Activated B cell treated with CpG ODN at 0.5 μM for 24 hours (primary cell): ENCODE measurements at regions of chr7 and their contacts with region 1.

Region 1: GRCh38 chr7:992709-993607 is 10.0 kb downstream of the CYP2W1 start:
- DNase-seq: peak; percentile 88
- ATAC-seq: peak; percentile 96
- H3K4me3 Mint-ChIP-seq: no peak overlapping the region
- H3K27ac Mint-ChIP-seq: no peak overlapping the region
- H3K4me1 Mint-ChIP-seq: peaks cover 11% of the 10 kb centered on the region
- H3K27me3 Mint-ChIP-seq: no peaks in the 10 kb centered on the region
- CTCF ChIP-seq: peak; percentile 89

Region 2: GRCh38 chr7:909358-910329 is 83.3 kb before region 1 on chr7:
- CTCF ChIA-PET with region 1: interaction called, 6 read pairs
- POLR2A ChIA-PET with region 1: interaction called, 3 read pairs
- intact Hi-C with region 1: loop called (anchors 1 kb)
- DNase-seq: peak; percentile 59
- ATAC-seq: peak; percentile 51
- H3K4me3 Mint-ChIP-seq: peak overlapping the region; percentile 74
- H3K27ac Mint-ChIP-seq: no peak overlapping the region
- H3K4me1 Mint-ChIP-seq: peaks cover 15% of the 10 kb centered on the region
- H3K27me3 Mint-ChIP-seq: peaks cover 2% of the 10 kb centered on the region
- CTCF ChIP-seq: no peak

Region 3: GRCh38 chr7:945556-946255 is 47.3 kb before region 1 on chr7:
- CTCF ChIA-PET with region 1: no interaction called
- POLR2A ChIA-PET with region 1: no interaction called
- intact Hi-C with region 1: no loop called
- DNase-seq: no peak
- ATAC-seq: no peak
- H3K4me3 Mint-ChIP-seq: no peak overlapping the region
- H3K27ac Mint-ChIP-seq: no peak overlapping the region
- H3K4me1 Mint-ChIP-seq: peaks cover 27% of the 10 kb centered on the region
- H3K27me3 Mint-ChIP-seq: peaks cover 6% of the 10 kb centered on the region
- CTCF ChIP-seq: no peak

Region 4: GRCh38 chr7:1012004-1012715 is 19.2 kb after region 1 on chr7:
- CTCF ChIA-PET with region 1: interaction called, 13 read pairs
- POLR2A ChIA-PET with region 1: interaction called, 3 read pairs
- intact Hi-C with region 1: no loop called
- DNase-seq: no peak
- ATAC-seq: no peak
- H3K4me3 Mint-ChIP-seq: no peak overlapping the region
- H3K27ac Mint-ChIP-seq: no peak overlapping the region
- H3K4me1 Mint-ChIP-seq: peaks cover 27% of the 10 kb centered on the region
- H3K27me3 Mint-ChIP-seq: no peaks in the 10 kb centered on the region
- CTCF ChIP-seq: no peak

Region 5: GRCh38 chr7:1059200-1060091 is 66.5 kb after region 1 on chr7:
- CTCF ChIA-PET with region 1: interaction called, 331 read pairs
- POLR2A ChIA-PET with region 1: interaction called, 76 read pairs
- intact Hi-C with region 1: no loop called
- DNase-seq: no peak
- ATAC-seq: peak; percentile 15
- H3K4me3 Mint-ChIP-seq: peak overlapping the region; percentile 32
- H3K27ac Mint-ChIP-seq: no peak overlapping the region
- H3K4me1 Mint-ChIP-seq: peaks cover 65% of the 10 kb centered on the region
- H3K27me3 Mint-ChIP-seq: peaks cover 8% of the 10 kb centered on the region
- CTCF ChIP-seq: no peak

Region 6: DNA sequence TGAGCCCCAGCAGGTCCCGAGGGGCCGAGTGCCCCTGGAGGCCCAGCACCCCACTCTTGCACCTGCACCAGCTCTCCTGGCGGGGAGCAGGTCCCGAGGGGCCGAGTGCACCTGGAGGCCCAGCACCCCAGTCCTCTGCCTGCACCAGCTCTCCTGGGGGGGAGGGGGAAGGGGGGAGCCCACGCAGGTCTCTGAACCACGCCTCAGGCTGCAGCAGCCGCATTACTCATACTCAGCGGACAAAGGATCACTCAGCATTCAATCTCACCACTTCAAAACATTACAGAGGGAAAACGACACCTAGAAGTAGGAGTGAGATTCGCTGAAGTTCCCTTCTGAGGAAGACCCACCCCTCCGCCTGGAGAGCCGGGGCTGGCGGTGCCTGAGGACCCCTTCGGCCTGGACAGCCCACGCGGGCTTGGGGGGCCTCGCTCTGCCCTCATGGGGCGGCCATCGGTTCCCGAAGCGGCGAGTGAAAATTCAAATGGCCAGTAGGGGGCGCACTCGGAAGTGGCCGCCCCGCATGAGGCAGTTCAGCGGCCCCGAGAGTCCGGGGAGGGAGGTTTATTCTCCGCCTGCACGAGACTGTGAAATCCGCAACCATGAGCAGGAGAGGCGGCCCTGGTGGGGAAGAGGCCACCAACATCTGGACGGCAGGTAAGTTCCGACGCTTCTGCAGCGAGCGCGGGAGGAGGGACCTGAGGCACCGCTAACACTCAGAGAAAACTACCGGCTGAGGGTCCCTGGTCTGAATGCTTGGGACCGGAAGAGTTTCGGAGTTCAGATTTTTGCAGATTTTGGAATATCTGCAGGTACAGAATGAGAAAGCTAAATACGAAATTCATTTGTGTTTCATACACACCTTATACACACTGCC is 93.9 kb after region 1 on chr7:
- CTCF ChIA-PET with region 1: interaction called, 20 read pairs
- POLR2A ChIA-PET with region 1: no interaction called
- intact Hi-C with region 1: loop called (anchors 5 kb)
- DNase-seq: peak; percentile 77
- ATAC-seq: peak; percentile 91
- H3K4me3 Mint-ChIP-seq: peak overlapping the region; percentile 83
- H3K27ac Mint-ChIP-seq: peak overlapping the region; percentile 70
- H3K4me1 Mint-ChIP-seq: peaks cover 33% of the 10 kb centered on the region
- H3K27me3 Mint-ChIP-seq: no peaks in the 10 kb centered on the region
- CTCF ChIP-seq: peak; percentile 95

Region 7: DNA sequence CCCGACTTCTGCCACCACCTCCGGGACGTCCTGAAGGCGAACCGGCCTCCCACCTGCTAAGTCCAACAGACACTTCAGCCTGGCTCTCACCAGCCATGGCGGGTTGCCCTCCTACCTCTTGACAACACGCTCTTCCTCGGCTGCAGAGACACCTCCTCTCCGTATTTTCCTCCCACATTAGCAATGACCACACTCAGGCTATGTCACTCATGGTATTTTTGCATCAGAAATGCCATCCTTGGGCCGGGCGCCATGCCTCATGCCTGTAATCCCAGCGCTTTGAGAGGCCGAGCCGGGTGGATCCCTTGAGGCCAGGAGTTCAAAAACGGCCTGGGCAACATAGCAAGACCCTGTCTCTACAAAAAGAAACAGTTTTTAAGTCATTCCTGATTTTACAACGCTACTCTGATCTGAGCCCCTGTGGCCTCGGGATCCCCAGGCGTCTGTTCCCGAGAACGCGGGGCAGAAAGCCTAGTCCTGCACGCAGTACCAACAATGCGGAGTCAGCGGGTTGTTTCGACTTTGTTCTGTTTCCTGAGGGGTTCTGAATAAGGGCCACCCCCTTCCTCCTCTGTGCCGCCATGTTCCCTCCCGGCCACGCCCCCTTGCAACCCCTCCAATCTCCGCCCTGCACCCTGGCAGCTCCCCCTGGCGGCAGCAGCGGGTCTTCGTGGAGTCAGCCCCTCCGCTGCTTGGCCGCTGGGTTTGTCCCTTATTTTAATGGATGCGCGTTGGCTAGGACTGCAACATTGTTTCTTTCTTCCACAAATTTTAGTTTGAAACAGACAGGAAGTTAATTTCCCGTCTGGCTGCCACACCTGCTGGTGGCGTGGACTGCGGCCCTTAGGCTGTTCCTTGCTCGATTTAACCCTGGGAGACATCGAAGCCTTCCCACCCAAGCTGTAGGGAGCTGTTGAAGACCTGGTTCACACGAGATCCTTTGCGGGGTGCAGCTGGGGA is 176.7 kb after region 1 on chr7:
- CTCF ChIA-PET with region 1: interaction called, 59 read pairs
- POLR2A ChIA-PET with region 1: no interaction called
- intact Hi-C with region 1: loop called (anchors 1 kb)
- DNase-seq: peak; percentile 74
- ATAC-seq: peak; percentile 97
- H3K4me3 Mint-ChIP-seq: peak overlapping the region; percentile 76
- H3K27ac Mint-ChIP-seq: no peak overlapping the region
- H3K4me1 Mint-ChIP-seq: peaks cover 14% of the 10 kb centered on the region
- H3K27me3 Mint-ChIP-seq: no peaks in the 10 kb centered on the region
- CTCF ChIP-seq: no peak

Region 8: DNA sequence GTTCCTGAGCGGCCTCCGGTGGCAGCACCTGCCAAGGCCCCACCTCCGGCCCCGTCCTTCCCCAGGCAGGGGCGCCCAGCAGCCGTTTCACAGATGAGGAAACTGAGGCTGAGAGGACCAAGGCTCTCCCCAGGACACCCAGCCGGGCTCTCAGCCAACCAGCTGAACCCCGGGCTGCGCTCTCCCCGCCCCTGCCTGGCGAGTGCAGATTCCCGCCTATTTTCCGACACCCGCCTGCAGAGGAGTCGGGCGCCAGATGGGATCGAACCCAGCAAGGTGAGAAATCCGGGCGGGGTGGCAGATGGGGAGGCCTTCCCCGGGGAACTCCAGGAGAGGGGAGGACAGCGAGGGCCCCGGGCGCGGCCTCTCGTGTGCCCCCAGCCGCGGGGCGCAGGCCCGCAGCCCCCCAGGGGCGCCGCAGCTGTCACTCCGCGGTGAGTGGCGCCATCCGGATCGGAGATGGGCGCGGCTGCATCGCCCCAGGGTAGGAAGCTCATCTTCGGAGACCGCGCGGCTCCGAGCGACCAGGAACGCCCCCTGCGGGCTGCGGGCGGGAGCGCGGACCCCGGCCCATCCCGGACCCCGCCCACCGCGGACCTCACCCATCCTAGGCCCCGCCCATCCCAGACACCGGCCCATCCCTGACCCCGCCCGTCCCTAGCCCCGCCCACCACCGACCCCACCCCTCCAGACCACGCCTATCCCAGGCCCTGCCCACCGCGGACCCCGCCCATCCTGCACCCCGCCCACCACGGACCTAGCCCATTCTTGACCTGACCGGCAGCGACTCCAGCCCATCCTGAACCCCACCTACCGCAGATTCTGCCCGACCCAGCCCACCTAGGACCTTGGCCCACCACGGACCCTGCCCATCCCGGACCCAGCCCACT is 376.0 kb after region 1 on chr7:
- CTCF ChIA-PET with region 1: no interaction called
- POLR2A ChIA-PET with region 1: no interaction called
- intact Hi-C with region 1: no loop called
- DNase-seq: no peak
- ATAC-seq: peak; percentile 58
- H3K4me3 Mint-ChIP-seq: peak overlapping the region; percentile 38
- H3K27ac Mint-ChIP-seq: no peak overlapping the region
- H3K4me1 Mint-ChIP-seq: peaks cover 2% of the 10 kb centered on the region
- H3K27me3 Mint-ChIP-seq: peaks cover 44% of the 10 kb centered on the region
- CTCF ChIP-seq: no peak